ENCODE measurements at regions of chr15 and their contacts with region 1.

Region 1: GRCh38 chr15:76057332-76058000 is 2.3 kb upstream of the TMEM266 start:
- DNase-seq: peak; percentile 47
- ATAC-seq: no peak
- H3K4me3 Mint-ChIP-seq: no peak overlapping the region
- H3K27ac Mint-ChIP-seq: no peak overlapping the region
- H3K4me1 Mint-ChIP-seq: peaks cover 25% of the 10 kb centered on the region
- H3K27me3 Mint-ChIP-seq: peaks cover 67% of the 10 kb centered on the region

Region 2: GRCh38 chr15:75809986-75810750 is 247.3 kb before region 1 on chr15:
- CTCF ChIA-PET with region 1: interaction called, 10 read pairs
- DNase-seq: no peak
- ATAC-seq: peak; percentile 53
- H3K4me3 Mint-ChIP-seq: no peak overlapping the region
- H3K27ac Mint-ChIP-seq: no peak overlapping the region
- H3K4me1 Mint-ChIP-seq: peaks cover 2% of the 10 kb centered on the region
- H3K27me3 Mint-ChIP-seq: peaks cover 11% of the 10 kb centered on the region

Region 3: GRCh38 chr15:76150971-76151598 is 93.6 kb after region 1 on chr15:
- CTCF ChIA-PET with region 1: interaction called, 33 read pairs
- DNase-seq: peak; percentile 83
- ATAC-seq: peak; percentile 94
- H3K4me3 Mint-ChIP-seq: no peak overlapping the region
- H3K27ac Mint-ChIP-seq: no peak overlapping the region
- H3K4me1 Mint-ChIP-seq: peaks cover 16% of the 10 kb centered on the region
- H3K27me3 Mint-ChIP-seq: peaks cover 20% of the 10 kb centered on the region